Heart right ventricle (tissue), 16 donors: ENCODE measurements at regions of chr13 and their contacts with region 1.

Region 1: GRCh38 chr13:48532506-48533499 is at the start of gene RCBTB2:
- DNase-seq: peak; percentile 98 to 100
- ATAC-seq: peak; percentile 96 to 99 (median 98)
- H3K4me3 ChIP-seq: peak within 1 kb of the TSS; percentile 59 to 76 (median 74)
- H3K27ac ChIP-seq: peak within 1 kb of the TSS; percentile 97 to 99 (median 98)
- H3K4me1 ChIP-seq: peaks cover 3 to 58% (median 34%) of the 10 kb centered on the region in 9 donors
- H3K27me3 ChIP-seq: no peaks in the 10 kb centered on the region
- CTCF ChIP-seq: peak in 2 of 9 donors; percentile 9 to 16
- total RNA-seq, gene RCBTB2: 8.3 to 16.2 (median 12.2) TPM

Region 2: DNA sequence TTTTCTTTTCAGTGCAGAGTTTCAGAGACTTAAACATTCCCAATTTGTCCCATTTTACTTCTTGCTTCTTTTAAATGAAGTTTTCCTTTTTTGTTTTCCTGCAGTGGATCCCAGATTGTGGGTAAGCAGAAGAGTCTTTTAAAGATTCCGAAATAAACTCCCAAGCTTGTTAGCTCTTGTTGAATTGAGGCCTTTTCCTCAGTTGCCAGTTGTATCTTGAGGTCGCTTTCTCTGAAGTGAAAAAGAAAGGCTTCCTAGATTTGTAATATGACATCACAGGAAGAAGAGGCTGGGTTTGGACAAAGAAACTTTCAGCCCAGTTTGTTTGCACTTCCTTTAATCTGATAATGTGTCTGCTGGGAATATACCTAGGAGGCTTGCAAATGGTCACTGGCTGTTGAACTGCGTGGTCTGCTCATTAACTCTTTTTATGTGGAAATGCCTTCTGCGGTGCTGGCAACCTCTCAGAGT is 119.9 kb before region 1 on chr13 and contains the start of gene LPAR6:
- intact Hi-C with region 1: loop called in 1 of 10 experiments (anchors 5 kb)
- DNase-seq: peak in 1 of 2 donors; percentile 54
- ATAC-seq: peak; percentile 64 to 94 (median 88)
- H3K4me3 ChIP-seq: peak within 1 kb of the TSS; percentile 22 to 69 (median 61)
- H3K27ac ChIP-seq: peak within 1 kb of the TSS; percentile 5 to 93 (median 80)
- H3K4me1 ChIP-seq: peaks cover 0 to 38% (median 24%) of the 10 kb centered on the region in 9 donors
- H3K27me3 ChIP-seq: no peaks in the 10 kb centered on the region
- CTCF ChIP-seq: no peak
- total RNA-seq, gene LPAR6: 5.0 to 28.7 (median 12.1) TPM

Region 3: DNA sequence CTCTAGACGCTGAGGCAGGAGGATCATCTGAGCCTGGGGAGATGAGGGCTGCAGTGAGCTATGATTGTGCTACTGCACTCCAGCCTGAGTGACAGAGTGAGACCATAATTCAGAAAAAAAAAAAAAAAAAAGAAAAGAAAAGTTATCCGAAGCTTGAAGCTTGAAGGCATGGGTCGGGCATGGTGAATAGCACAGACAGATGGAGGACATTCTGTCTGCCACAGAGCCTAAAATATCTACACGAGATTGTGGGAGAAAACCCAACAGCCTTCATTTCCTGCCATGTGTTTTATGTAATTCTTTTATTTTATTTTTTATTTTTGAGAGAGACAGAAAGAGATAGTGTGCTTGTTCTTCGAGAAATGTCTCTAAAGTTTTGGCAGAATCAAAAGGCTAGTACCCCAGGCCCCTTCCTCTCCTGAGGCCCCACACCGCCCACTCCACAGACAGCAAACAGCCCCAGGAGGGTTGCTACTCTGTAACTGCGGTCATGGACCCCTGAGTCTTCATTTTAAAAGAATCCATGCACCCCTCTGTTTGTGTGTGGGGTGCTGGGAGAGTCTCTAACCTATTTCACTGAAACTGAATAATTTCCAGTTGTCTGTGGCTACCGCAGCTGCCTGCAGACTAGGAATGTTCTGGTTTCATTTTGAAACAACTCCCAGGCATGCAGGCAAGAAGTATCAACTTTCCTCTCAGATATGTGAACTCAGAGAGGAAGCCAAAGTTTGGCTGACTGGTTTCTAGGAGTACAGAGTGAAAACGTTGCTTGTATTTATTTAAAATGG is 38.5 kb after region 1 on chr13:
- intact Hi-C with region 1: loop called in 6 of 10 experiments (anchors 2 to 5 kb)
- DNase-seq: peak in 1 of 2 donors; percentile 59
- ATAC-seq: peak; percentile 40 to 82 (median 70)
- H3K4me3 ChIP-seq: peak overlapping the region in 7 of 10 donors; percentile 23 to 46 (median 30)
- H3K27ac ChIP-seq: peak overlapping the region; percentile 60 to 92 (median 83)
- H3K4me1 ChIP-seq: peaks cover 0 to 88% (median 72%) of the 10 kb centered on the region in 9 donors
- H3K27me3 ChIP-seq: no peaks in the 10 kb centered on the region
- CTCF ChIP-seq: no peak